ENCODE measurements at regions of chr3 and their contacts with region 1.

Region 1: DNA sequence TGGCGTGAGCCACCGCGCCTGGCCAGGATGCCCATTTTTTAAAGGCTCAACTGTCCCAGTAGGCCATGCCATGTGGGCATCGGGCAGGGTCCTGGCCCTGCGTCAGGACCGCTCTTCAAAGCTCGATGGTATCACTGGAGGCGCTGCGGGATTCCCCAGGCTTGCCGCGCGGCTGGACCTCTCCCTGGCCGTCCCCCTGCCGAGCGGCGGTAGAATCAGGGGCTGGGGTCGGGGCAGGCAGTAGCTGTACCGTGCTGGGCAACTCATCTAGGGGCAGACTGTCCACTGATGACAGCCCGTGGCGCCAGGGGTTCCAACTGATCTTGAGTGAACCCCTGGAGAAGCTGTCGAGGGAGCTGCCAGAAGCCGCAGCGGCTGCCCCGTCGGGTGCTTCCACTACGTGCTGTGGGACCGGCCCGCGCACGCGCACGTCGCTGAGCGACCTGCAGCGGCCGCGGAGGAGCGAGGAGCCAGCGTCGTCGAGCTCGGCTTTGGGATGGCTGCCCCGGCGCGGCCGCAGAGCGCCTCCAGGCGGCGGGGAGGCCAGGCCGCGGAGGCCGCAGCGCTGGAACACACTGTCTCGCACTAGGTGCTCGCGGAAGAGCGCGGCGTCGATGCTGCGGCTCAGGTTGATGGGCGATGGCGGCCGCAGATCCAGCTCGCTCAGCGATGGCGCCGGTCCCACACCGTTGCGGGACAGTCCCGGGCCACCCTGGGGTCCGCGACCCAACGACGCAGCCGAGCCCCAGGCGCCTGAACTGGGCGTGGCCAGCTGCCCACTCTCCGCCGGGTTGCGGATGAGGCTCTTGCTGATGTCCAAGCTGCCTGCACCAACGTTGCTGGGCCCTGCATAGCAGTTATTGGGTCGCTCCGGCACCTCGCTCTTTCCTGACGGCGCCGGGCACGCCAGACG is 5.8 kb downstream of the PRRT3 start:
- DNase-seq: peak; percentile 90
- H3K4me3 Mint-ChIP-seq: peak overlapping the region; percentile 88
- H3K27ac Mint-ChIP-seq: peak overlapping the region; percentile 82
- H3K4me1 Mint-ChIP-seq: no peaks in the 10 kb centered on the region
- H3K27me3 Mint-ChIP-seq: no peaks in the 10 kb centered on the region
- CTCF ChIP-seq: peak; percentile 82

Region 2: DNA sequence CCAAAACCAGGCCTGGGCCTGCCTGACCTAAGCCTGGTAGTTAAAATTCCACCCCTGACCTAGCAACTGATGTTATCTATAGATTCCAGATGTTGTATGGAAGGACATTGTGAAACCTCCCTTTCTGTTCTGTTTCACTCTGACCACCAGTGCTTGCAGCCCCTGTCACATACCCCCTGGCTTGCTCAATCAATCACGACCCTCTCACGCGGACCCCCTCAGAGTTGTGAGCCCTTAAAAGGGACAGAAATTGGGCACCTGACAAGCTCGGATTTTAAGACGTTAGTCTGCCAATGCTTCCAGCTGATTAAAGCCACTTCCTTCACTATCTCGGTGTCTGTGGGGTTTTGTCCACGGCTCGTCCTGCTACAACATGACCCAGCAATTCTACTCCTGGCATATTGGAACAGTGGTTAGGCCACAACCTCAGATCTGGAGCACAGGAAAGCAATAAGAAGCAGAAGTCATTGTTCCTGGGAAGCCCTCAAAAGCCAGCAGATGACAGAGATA is 356.0 kb before region 1 on chr3:
- CTCF ChIA-PET with region 1: no interaction called
- POLR2A ChIA-PET with region 1: no interaction called
- intact Hi-C with region 1: no loop called
- DNase-seq: no peak
- H3K4me3 Mint-ChIP-seq: no peak overlapping the region
- H3K27ac Mint-ChIP-seq: no peak overlapping the region
- H3K4me1 Mint-ChIP-seq: no peaks in the 10 kb centered on the region
- H3K27me3 Mint-ChIP-seq: peaks cover 24% of the 10 kb centered on the region
- CTCF ChIP-seq: no peak

Region 3: GRCh38 chr3:9792405-9793160 is 153.8 kb before region 1 on chr3 and contains the starts of genes ARPC4 and TADA3:
- CTCF ChIA-PET with region 1: interaction called, 4 read pairs
- POLR2A ChIA-PET with region 1: interaction called, 18 read pairs
- intact Hi-C with region 1: no loop called
- DNase-seq: peak; percentile 96
- H3K4me3 Mint-ChIP-seq: peak within 1 kb of the TSS; percentile 98
- H3K27ac Mint-ChIP-seq: peak within 1 kb of the TSS; percentile 100
- H3K4me1 Mint-ChIP-seq: peaks cover 31% of the 10 kb centered on the region
- H3K27me3 Mint-ChIP-seq: no peaks in the 10 kb centered on the region
- CTCF ChIP-seq: no peak
- total RNA-seq, gene ARPC4: 122 and 132 TPM in 2 replicates
- total RNA-seq, gene TADA3: 72.0 and 77.1 TPM in 2 replicates

Region 4: DNA sequence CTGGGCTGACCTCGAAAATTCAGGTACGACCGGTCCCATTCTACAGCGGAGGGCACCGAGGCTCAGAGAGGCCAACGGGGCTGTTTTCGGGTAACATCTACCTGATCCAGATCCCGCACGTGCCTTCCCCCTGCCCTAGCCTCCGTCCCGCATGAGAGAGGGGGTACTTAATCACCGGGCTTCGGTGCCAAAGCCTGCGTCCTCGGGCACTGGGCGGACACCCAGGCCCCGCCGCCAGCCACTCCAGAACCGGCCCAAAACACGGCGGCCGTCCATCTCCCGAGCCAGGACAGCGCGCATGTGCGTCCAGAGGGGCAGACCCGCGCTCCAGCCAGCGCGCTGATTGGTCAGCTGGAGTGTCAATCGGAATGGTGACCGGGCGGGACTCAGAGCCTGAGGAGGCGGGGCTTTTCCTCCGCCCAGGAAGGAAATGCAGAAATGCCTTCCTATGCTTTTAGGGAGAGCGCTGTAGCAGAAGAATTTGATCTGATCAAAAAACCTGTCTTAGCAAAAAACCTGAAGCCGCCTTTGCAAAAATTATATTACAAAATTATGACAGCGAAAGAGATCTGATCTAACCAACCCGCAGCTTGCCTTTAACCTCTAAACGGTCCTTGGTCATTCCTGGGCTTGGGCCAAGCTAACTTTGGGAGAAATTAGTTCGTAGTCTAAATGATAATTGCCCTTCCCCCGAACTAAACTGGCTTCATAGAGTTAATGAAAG is 102.5 kb before region 1 on chr3 and contains the start of gene RPUSD3:
- CTCF ChIA-PET with region 1: interaction called, 22 read pairs
- POLR2A ChIA-PET with region 1: interaction called, 25 read pairs
- intact Hi-C with region 1: loop called (anchors 1 kb)
- DNase-seq: peak; percentile 95
- H3K4me3 Mint-ChIP-seq: peak within 1 kb of the TSS; percentile 100
- H3K27ac Mint-ChIP-seq: peak within 1 kb of the TSS; percentile 92
- H3K4me1 Mint-ChIP-seq: peaks cover 14% of the 10 kb centered on the region
- H3K27me3 Mint-ChIP-seq: no peaks in the 10 kb centered on the region
- CTCF ChIP-seq: no peak
- total RNA-seq, gene RPUSD3: 40.3 and 40.7 TPM in 2 replicates

Region 5: DNA sequence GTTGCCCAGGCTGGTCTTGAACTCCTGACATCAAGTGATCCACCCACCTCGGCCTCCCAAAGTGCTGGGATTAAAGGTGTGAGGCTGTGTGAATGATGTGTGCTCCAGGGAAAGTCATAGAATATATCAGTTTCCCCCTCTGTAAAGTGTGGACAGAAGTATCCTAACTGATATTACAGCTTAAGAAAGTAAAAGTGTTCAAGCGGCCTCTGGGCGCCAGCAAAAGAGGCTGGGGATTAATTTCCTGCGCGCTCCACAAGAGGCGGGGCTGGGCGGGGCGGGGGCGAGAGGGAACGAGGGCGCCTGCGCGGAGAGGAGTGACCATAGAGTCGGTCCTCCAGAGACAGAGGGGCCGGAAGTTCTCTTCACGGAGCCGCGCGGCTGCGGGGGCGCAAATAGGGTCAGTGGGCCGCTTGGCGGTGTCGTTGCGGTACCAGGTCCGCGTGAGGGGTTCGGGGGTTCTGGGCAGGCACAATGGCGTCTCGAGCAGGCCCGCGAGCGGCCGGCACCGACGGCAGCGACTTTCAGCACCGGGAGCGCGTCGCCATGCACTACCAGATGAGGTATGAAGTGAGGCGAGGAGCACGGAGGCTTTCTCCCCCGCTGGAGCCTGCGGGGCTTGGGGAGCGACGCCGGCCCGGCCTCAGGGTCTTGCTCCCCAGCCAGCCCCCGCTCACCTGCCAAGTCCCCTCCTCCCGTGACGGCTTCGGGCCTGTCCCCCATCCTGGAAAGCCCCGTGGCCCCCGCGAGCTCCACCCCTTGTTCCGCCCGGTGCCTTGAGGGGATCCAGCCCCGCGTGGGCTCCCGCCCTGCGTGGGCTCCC is 55.9 kb before region 1 on chr3 and contains the start of gene JAGN1:
- CTCF ChIA-PET with region 1: interaction called, 9 read pairs
- POLR2A ChIA-PET with region 1: interaction called, 17 read pairs
- intact Hi-C with region 1: no loop called
- DNase-seq: peak; percentile 90
- H3K4me3 Mint-ChIP-seq: peak within 1 kb of the TSS; percentile 91
- H3K27ac Mint-ChIP-seq: peak within 1 kb of the TSS; percentile 98
- H3K4me1 Mint-ChIP-seq: peaks cover 45% of the 10 kb centered on the region
- H3K27me3 Mint-ChIP-seq: no peaks in the 10 kb centered on the region
- CTCF ChIP-seq: no peak
- total RNA-seq, gene JAGN1: 49.7 and 55.4 TPM in 2 replicates

Region 6: GRCh38 chr3:9932843-9933560 is 13.4 kb before region 1 on chr3:
- CTCF ChIA-PET with region 1: interaction called, 42 read pairs
- POLR2A ChIA-PET with region 1: interaction called, 31 read pairs
- intact Hi-C with region 1: no loop called
- DNase-seq: peak; percentile 77
- H3K4me3 Mint-ChIP-seq: peak overlapping the region; percentile 90
- H3K27ac Mint-ChIP-seq: peak overlapping the region; percentile 86
- H3K4me1 Mint-ChIP-seq: peaks cover 23% of the 10 kb centered on the region
- H3K27me3 Mint-ChIP-seq: no peaks in the 10 kb centered on the region
- CTCF ChIP-seq: peak; percentile 59

Region 7: DNA sequence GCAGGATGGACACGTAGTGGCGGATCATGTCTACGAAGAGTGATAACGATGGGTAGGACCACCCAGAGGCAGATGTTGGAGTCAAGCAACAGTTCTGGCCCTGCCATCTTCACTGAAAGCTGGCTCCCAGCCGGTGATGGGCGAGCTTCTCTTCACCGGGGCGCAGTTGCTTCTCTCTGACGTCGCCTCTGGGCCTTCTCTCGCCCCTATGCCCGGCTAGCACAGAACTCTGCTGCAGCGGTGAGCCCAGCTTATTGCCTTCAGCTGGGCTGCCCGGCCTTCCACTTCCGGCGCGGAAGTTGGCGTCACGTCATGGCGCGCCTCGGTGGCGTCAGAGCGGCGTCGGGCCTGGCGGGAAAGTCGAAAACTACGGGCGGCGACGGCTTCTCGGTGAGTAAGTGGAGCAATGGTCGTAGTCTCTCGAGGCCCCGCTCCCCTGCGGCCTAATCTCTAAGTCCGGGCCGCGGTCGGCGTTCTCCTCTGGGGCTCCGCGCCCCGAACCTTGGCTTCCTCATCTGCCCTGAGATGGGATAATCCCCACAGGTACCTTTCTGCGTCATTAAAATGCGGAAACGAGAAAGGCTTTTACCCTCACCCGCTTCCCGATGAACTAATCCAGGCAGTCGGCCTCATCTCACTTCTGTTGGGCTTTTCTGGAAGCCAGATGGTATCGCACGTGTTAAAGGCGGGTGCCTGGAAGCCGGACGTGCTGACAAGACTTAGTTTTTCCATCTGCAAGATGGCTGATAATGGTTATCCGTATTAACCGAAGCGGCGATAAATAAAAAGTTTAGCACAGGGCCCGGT is 79.9 kb after region 1 on chr3 and contains the start of gene FANCD2:
- CTCF ChIA-PET with region 1: interaction called, 4 read pairs
- POLR2A ChIA-PET with region 1: interaction called, 10 read pairs
- intact Hi-C with region 1: loop called (anchors 5 kb)
- DNase-seq: peak; percentile 85
- H3K4me3 Mint-ChIP-seq: peak within 1 kb of the TSS; percentile 88
- H3K27ac Mint-ChIP-seq: peak within 1 kb of the TSS; percentile 87
- H3K4me1 Mint-ChIP-seq: peaks cover 11% of the 10 kb centered on the region
- H3K27me3 Mint-ChIP-seq: no peaks in the 10 kb centered on the region
- CTCF ChIP-seq: no peak
- total RNA-seq, gene FANCD2: 14.6 and 24.6 TPM in 2 replicates

Measured in MCF 10A (cell line).